T-cell (primary cell): ENCODE measurements at regions of chr11 and their contacts with region 1.

Region 1: GRCh38 chr11:72144807-72145560 is 9.5 kb downstream of the FOLR3 start:
- DNase-seq: no peak
- ATAC-seq: no peak
- H3K4me3 ChIP-seq: no peak overlapping the region
- H3K4me3 Mint-ChIP-seq: no peak overlapping the region
- H3K27ac ChIP-seq: no peak overlapping the region
- H3K27ac Mint-ChIP-seq: no peak overlapping the region
- H3K4me1 ChIP-seq: peaks cover 0 to 3% of the 10 kb centered on the region in 2 experiments
- H3K4me1 Mint-ChIP-seq: peaks cover 4 to 14% (median 10%) of the 10 kb centered on the region in 3 donors
- H3K27me3 ChIP-seq: peaks cover 0 to 4% of the 10 kb centered on the region in 2 experiments
- H3K27me3 Mint-ChIP-seq: peaks cover 12 to 15% of the 10 kb centered on the region in 2 donors

Region 2: DNA sequence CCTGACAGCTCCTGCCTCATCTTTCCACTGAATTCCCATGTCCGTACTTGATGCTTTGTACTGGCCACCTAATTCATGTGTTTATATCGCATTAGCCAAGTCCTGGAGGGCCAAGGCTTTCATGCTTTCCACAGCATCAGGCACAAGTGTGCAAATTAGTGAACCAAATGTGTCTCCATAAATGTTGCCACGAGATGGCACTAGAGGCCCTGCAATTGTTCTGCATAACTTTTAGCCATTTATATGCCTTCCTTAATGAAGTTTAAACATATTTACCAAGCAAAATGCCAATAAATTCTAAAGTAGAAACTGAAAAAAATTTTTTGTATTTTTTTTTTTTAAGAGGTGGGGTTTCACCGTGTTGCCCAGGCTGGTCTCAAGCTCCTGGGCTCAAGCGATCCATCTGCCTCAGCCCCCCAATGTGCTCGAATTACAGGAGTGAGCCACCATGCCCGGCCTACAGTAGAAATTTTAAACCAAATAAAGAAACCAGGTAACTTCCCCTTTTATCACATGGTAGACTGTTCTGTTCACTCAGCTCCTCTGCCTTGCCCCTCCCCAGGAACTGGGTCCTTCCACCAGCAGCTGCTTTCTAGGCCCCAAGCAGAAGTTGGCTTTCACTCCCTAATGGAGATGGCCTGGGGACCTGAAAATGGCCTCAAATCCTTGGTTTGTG is 167.1 kb before region 1 on chr11:
- CTCF ChIA-PET with region 1: interaction called, 7 to 22 read pairs
- POLR2A ChIA-PET with region 1: interaction called in 1 of 2 experiments, 3 read pairs
- DNase-seq: peak in 29 of 35 experiments; percentile 15 to 73 (median 40)
- ATAC-seq: peak; percentile 52 to 63 (median 57)
- H3K4me3 ChIP-seq: no peak overlapping the region
- H3K4me3 Mint-ChIP-seq: no peak overlapping the region
- H3K27ac ChIP-seq: no peak overlapping the region
- H3K27ac Mint-ChIP-seq: no peak overlapping the region
- H3K4me1 ChIP-seq: no peaks in the 10 kb centered on the region
- H3K4me1 Mint-ChIP-seq: peaks cover 0 to 4% (median 0%) of the 10 kb centered on the region in 3 donors
- H3K27me3 ChIP-seq: no peaks in the 10 kb centered on the region
- H3K27me3 Mint-ChIP-seq: no peaks in the 10 kb centered on the region

Region 3: GRCh38 chr11:72112321-72113219 is 32.4 kb before region 1 on chr11 and contains the start of gene ANAPC15:
- CTCF ChIA-PET with region 1: interaction called in 1 of 2 experiments, 13 read pairs
- POLR2A ChIA-PET with region 1: no interaction called
- DNase-seq: peak; percentile 93 to 100 (median 99)
- ATAC-seq: peak; percentile 88 to 91 (median 89)
- H3K4me3 ChIP-seq: peak within 1 kb of the TSS; percentile 79 to 97
- H3K4me3 Mint-ChIP-seq: peak within 1 kb of the TSS; percentile 89 to 96 (median 92)
- H3K27ac ChIP-seq: peak within 1 kb of the TSS; percentile 91
- H3K27ac Mint-ChIP-seq: peak within 1 kb of the TSS; percentile 99 to 100
- H3K4me1 ChIP-seq: peaks cover 8 to 21% of the 10 kb centered on the region in 2 experiments
- H3K4me1 Mint-ChIP-seq: peaks cover 22 to 28% (median 28%) of the 10 kb centered on the region in 3 donors
- H3K27me3 ChIP-seq: peaks cover 0 to 6% of the 10 kb centered on the region in 2 experiments
- H3K27me3 Mint-ChIP-seq: peaks cover 7% of the 10 kb centered on the region in 2 donors
- total RNA-seq, gene ANAPC15: 44.8 to 51.0 (median 47.7) TPM

Region 4: DNA sequence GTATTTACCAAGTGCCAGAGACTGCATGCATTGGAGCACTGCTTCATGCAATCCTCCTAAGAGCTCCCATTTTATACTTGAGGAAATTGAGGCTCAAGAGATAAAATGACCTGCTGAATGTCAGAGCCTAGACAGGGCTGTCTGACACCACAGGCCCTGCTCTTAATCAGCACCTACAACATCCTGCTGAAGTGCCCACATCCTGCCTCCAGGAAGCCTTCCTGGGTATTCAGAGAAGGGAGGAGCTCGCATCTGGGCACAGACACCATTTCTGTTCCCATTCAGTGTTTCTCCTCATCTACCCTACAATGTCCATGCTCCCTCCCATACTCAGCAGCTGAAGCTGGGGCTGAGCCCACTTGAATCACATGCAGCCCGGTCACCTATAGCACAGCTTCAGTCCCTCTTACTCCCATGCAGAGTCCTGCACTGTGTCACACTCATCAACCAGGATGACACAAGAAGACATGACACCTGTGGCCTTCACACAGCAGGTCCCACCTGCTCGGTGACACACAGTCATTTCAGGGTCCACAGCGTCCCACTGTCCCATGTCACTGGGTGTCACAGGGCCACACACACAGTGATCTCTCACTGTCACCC is 476.1 kb after region 1 on chr11:
- CTCF ChIA-PET with region 1: interaction called in 1 of 2 experiments, 12 read pairs
- POLR2A ChIA-PET with region 1: no interaction called
- DNase-seq: peak in 2 of 35 experiments; percentile 11 to 17
- ATAC-seq: peak; percentile 46 to 74 (median 56)
- H3K4me3 ChIP-seq: no peak overlapping the region
- H3K4me3 Mint-ChIP-seq: peak overlapping the region in 1 of 3 donors; percentile 5
- H3K27ac ChIP-seq: no peak overlapping the region
- H3K27ac Mint-ChIP-seq: peak overlapping the region; percentile 18 to 53
- H3K4me1 ChIP-seq: peaks cover 2 to 21% of the 10 kb centered on the region in 2 experiments
- H3K4me1 Mint-ChIP-seq: peaks cover 16 to 29% (median 19%) of the 10 kb centered on the region in 3 donors
- H3K27me3 ChIP-seq: peaks cover 0 to 18% of the 10 kb centered on the region in 2 experiments
- H3K27me3 Mint-ChIP-seq: peaks cover 2 to 5% of the 10 kb centered on the region in 2 donors

Region 5: GRCh38 chr11:72652873-72653630 is 508.1 kb after region 1 on chr11:
- CTCF ChIA-PET with region 1: no interaction called
- POLR2A ChIA-PET with region 1: no interaction called
- DNase-seq: no peak
- ATAC-seq: no peak
- H3K4me3 ChIP-seq: no peak overlapping the region
- H3K4me3 Mint-ChIP-seq: no peak overlapping the region
- H3K27ac ChIP-seq: no peak overlapping the region
- H3K27ac Mint-ChIP-seq: no peak overlapping the region
- H3K4me1 ChIP-seq: no peaks in the 10 kb centered on the region
- H3K4me1 Mint-ChIP-seq: no peaks in the 10 kb centered on the region
- H3K27me3 ChIP-seq: peaks cover 0 to 27% of the 10 kb centered on the region in 2 experiments
- H3K27me3 Mint-ChIP-seq: peaks cover 0 to 11% of the 10 kb centered on the region in 2 donors